Mucosa of descending colon (tissue), 3 donors: ENCODE measurements at regions of chr3 and their contacts with region 1.

Region 1: DNA sequence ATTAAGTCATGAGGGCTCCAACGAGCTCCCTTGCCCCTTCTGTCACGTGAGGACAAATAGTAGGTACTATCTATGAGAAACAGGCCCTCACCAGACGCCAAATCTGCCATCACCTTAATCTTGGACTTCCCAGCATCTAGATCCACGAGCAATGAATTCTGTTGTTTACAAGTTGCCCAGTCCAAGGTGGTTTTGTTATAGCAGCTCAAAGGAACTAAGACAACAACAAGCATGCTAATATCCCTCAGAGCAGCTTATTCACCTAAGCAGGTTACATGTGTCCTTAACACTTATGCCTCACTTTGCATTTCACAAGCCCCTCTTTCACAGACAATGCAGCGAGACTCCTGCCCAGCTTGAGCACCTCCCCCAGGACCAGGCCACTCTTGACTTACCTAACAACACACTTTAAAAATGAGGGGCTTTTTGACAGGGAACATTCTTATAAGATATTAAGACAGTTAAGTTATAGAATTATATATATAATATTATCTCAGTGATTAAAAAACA is 219.5 kb downstream of the PLCH1 start:
- DNase-seq: no peak
- ATAC-seq: no peak
- H3K4me3 ChIP-seq: no peak overlapping the region
- H3K4me1 ChIP-seq: no peaks in the 10 kb centered on the region
- CTCF ChIP-seq: no peak

Region 2: GRCh38 chr3:154690413-154690812 is 835.0 kb before region 1 on chr3:
- intact Hi-C with region 1: loop called in 1 of 2 experiments (anchors 5 kb)
- DNase-seq: no peak
- ATAC-seq: no peak
- H3K4me3 ChIP-seq: no peak overlapping the region
- H3K4me1 ChIP-seq: no peaks in the 10 kb centered on the region
- CTCF ChIP-seq: no peak